HEK293 (cell line): ENCODE measurements at regions of chr1 and their contacts with region 1.

Region 1: GRCh38 chr1:228405987-228406265 is 709 bp downstream of the TRIM11 start:
- H3K4me3 ChIP-seq: peak overlapping the region; percentile 59
- H3K27ac ChIP-seq: peak overlapping the region; percentile 88
- H3K4me1 ChIP-seq: peaks cover 11% of the 10 kb centered on the region
- CTCF ChIP-seq: no peak

Region 2: GRCh38 chr1:228393248-228393699 is 12.7 kb before region 1 on chr1:
- CTCF ChIA-PET with region 1: interaction called, 7 read pairs
- POLR2A ChIA-PET with region 1: interaction called, 12 read pairs
- H3K4me3 ChIP-seq: no peak overlapping the region
- H3K27ac ChIP-seq: no peak overlapping the region
- H3K4me1 ChIP-seq: no peaks in the 10 kb centered on the region; the same call in 1 of the 2 replicates
- CTCF ChIP-seq: peak; percentile 65; the same call in 1 of the 2 replicates

Region 3: DNA sequence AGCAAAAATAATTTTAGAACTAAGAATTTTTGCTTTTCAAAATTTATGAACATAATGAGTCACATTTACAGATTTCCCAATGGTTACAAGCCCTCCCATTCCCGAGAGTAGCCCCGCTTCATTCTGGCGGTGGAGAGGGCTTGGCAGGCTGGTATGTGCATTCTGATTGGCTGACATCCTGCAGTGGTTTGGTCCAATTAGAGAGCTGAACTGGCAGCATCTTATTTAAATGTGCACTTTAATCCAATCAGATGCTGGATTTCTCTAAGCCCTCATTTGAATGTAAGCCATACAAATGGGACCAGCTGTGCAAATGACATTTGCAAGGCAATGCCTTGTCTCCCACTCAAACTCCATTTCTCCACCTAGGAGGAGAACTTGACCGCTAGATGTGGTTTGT is 28.8 kb after region 1 on chr1:
- CTCF ChIA-PET with region 1: no interaction called
- POLR2A ChIA-PET with region 1: interaction called, 14 read pairs
- H3K4me3 ChIP-seq: no peak overlapping the region
- H3K27ac ChIP-seq: no peak overlapping the region
- H3K4me1 ChIP-seq: no peaks in the 10 kb centered on the region
- CTCF ChIP-seq: no peak

Region 4: DNA sequence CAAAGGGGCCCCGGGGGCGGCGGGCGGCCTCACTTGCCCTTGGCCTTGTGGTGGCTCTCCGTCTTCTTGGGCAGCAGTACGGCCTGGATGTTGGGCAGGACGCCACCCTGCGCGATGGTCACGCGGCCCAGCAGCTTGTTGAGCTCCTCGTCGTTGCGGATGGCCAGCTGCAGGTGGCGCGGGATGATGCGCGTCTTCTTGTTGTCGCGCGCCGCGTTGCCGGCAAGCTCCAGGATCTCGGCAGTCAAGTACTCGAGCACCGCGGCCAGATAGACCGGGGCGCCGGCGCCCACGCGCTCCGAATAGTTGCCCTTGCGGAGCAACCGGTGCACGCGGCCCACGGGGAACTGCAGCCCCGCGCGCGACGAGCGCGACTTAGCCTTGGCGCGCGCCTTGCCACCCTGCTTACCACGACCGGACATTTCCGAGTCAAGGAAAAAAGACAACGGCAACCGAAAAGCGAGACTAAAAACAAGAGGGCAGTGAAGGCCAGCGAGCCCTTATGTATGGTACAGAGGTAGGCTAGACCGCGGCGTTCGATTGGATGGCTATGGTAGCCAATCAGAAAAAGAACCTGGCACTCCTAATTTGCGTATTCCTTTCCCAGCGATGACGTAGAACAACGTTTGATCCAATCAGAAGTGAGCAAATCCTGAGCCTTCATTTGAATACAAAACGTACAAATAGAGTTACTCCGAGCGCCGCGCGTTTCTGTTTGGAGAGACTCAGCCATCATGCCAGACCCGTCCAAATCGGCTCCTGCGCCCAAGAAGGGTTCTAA is 51.7 kb after region 1 on chr1:
- CTCF ChIA-PET with region 1: interaction called, 4 read pairs
- POLR2A ChIA-PET with region 1: interaction called, 41 read pairs
- H3K4me3 ChIP-seq: peak overlapping the region; percentile 85
- H3K27ac ChIP-seq: peak overlapping the region; percentile 70
- H3K4me1 ChIP-seq: peaks cover 6% of the 10 kb centered on the region; the same call in 1 of the 2 replicates
- CTCF ChIP-seq: peak; percentile 99

Region 5: DNA sequence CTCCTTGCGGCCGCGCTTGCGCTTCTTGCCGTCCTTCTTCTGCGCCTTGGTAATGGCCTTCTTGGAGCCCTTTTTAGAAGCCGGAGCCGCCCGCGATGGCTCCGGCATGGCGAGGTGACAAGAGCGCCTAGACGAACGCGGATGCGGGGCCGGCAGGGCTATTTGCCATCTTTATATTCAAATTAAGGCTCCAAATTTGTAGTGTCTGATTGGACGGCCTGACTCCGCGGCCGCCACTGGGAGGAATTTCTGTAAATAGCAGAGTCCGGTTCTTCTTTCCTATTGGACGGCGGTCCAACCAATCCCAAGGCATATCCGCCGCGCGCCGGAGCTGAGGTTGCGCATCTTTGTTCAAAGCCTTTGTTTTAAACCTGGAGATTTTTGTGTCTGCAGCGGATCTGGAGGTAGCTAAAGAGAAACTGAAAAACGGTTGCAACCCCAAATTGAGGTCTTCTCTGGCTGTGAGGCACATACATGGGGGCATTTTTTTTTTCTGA is 58.6 kb after region 1 on chr1:
- CTCF ChIA-PET with region 1: interaction called, 3 read pairs
- POLR2A ChIA-PET with region 1: interaction called, 10 read pairs
- H3K4me3 ChIP-seq: peak overlapping the region; percentile 30
- H3K27ac ChIP-seq: no peak overlapping the region
- H3K4me1 ChIP-seq: peaks cover 5% of the 10 kb centered on the region; the same call in 1 of the 2 replicates
- CTCF ChIP-seq: no peak

Region 6: GRCh38 chr1:228486596-228487335 is 80.8 kb after region 1 on chr1:
- CTCF ChIA-PET with region 1: no interaction called
- POLR2A ChIA-PET with region 1: interaction called, 11 read pairs
- H3K4me3 ChIP-seq: peak overlapping the region; percentile 79
- H3K27ac ChIP-seq: peak overlapping the region; percentile 91
- H3K4me1 ChIP-seq: peaks cover 7% of the 10 kb centered on the region
- CTCF ChIP-seq: peak; percentile 46